Stomach (tissue), 19 donors: ENCODE measurements at regions of chr20 and their contacts with region 1.

Region 1: GRCh38 chr20:59751056-59751688 is 146.8 kb downstream of the PHACTR3 start:
- DNase-seq: peak; percentile 60 to 91
- H3K4me3 ChIP-seq: no peak overlapping the region
- H3K27ac ChIP-seq: no peak overlapping the region
- H3K4me1 ChIP-seq: peaks cover 0 to 46% (median 18%) of the 10 kb centered on the region in 4 donors
- H3K27me3 ChIP-seq: peaks cover 0 to 64% (median 12%) of the 10 kb centered on the region in 3 donors
- CTCF ChIP-seq: peak in 4 of 7 experiments; percentile 22 to 57 (median 46)
- EP300 ChIP-seq: no peak
- POLR2A ChIP-seq: no peak

Region 2: GRCh38 chr20:59571551-59572314 is 179.4 kb before region 1 on chr20:
- intact Hi-C with region 1: loop called (anchors 10 kb)
- DNase-seq: peak; percentile 55 to 87
- H3K4me3 ChIP-seq: peak overlapping the region; percentile 28 to 48 (median 35)
- H3K27ac ChIP-seq: peak overlapping the region; percentile 53 to 80 (median 67)
- H3K4me1 ChIP-seq: peaks cover 5 to 16% (median 8%) of the 10 kb centered on the region in 4 donors
- H3K27me3 ChIP-seq: peaks cover 9 to 81% (median 15%) of the 10 kb centered on the region in 3 donors
- CTCF ChIP-seq: peak in 5 of 7 experiments; percentile 43 to 95 (median 92)
- EP300 ChIP-seq: no peak
- POLR2A ChIP-seq: no peak